CD8-positive, alpha-beta T cell (primary cell): ENCODE measurements at regions of chr3 and their contacts with region 1.

Region 1: DNA sequence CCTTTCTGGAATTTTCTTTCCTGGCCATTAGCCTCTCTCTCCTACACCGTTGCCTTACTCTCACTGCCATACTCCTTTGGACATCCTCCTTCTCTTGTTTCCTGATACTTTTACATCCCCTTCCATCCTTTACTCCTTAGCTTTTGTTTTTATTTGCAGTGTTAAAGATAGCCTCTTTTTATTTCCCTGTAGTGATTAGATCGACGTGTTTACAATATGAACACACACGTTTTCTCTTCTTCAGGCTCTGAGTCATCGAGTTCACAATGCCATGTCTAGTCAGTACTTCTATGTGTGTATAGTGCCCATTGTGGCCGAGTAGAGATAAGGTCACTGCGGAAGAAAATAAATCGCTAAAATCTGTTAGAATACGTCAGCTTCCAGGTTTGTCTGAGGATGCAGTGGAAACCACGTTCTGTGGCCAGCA is 208.5 kb downstream of the LPP start:
- DNase-seq: peak in 3 of 9 experiments; percentile 44 to 65 (median 61)
- ATAC-seq: peak; percentile 66
- H3K4me3 ChIP-seq: no peak overlapping the region
- H3K4me3 Mint-ChIP-seq: peak overlapping the region; percentile 62
- H3K27ac ChIP-seq: peak overlapping the region in 1 of 2 experiments; percentile 9
- H3K27ac Mint-ChIP-seq: peak overlapping the region; percentile 89
- H3K4me1 ChIP-seq: peaks cover 47% of the 10 kb centered on the region
- H3K4me1 Mint-ChIP-seq: peaks cover 57% of the 10 kb centered on the region
- H3K27me3 ChIP-seq: no peaks in the 10 kb centered on the region
- H3K27me3 Mint-ChIP-seq: no peaks in the 10 kb centered on the region
- CTCF ChIP-seq: no peak

Region 2: DNA sequence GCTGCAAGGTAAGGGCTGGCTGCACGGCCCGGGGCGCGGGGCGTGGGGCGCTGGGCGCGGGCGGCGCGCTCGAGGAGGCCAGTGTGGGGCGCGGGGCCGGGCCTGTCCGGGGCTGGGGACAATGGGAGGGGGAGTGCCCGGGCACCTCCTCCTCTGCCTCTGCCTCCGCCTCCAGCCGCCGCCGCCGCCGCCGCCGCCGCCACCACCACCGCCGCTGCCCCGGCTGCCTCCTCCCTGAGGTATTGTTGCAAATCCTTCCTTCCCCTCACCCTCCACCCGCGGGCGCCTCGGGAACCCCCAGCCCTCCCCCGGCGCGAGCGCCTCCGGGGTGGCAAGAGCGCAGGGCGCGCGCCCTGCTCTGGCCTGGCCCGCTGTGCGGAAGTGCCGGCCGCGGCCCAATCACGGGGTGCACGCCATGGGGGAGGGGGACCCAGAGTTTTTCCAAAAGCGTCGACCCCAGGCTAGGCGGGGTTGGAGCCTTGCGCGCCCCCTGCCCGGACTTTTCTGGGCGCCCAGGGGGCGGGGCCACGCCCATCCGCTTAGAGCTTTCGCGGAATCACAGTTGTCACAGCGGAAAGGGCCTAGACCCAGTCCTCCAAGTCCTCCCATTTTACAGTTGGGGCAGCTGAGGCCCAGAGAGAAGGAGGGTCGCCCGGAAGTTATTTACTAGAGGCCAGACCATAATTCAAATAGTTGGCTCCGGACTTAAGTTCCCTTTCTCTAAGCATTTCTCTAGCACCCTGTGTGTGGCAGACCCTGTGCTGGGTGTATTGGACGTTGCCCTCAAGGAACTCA is 208.2 kb before region 1 on chr3 and contains the start of gene LPP:
- CTCF ChIA-PET with region 1: no interaction called
- POLR2A ChIA-PET with region 1: no interaction called
- intact Hi-C with region 1: loop called in 1 of 2 experiments (anchors 5 kb)
- DNase-seq: peak; percentile 60 to 93 (median 79)
- ATAC-seq: peak; percentile 84
- H3K4me3 ChIP-seq: peak within 1 kb of the TSS; percentile 72 to 81
- H3K4me3 Mint-ChIP-seq: peak within 1 kb of the TSS; percentile 88
- H3K27ac ChIP-seq: peak within 1 kb of the TSS; percentile 64 to 79
- H3K27ac Mint-ChIP-seq: peak within 1 kb of the TSS; percentile 90
- H3K4me1 ChIP-seq: peaks cover 27% of the 10 kb centered on the region
- H3K4me1 Mint-ChIP-seq: peaks cover 52% of the 10 kb centered on the region
- H3K27me3 ChIP-seq: no peaks in the 10 kb centered on the region
- H3K27me3 Mint-ChIP-seq: no peaks in the 10 kb centered on the region
- CTCF ChIP-seq: no peak
- total RNA-seq, gene LPP: 35.2 to 37.0 TPM

Region 3: GRCh38 chr3:188320757-188321156 is 41.7 kb before region 1 on chr3:
- CTCF ChIA-PET with region 1: interaction called, 3 read pairs
- POLR2A ChIA-PET with region 1: no interaction called
- intact Hi-C with region 1: loop called in 1 of 2 experiments (anchors 5 kb)
- DNase-seq: no peak
- ATAC-seq: no peak
- H3K4me3 ChIP-seq: no peak overlapping the region
- H3K4me3 Mint-ChIP-seq: no peak overlapping the region
- H3K27ac ChIP-seq: no peak overlapping the region
- H3K27ac Mint-ChIP-seq: no peak overlapping the region
- H3K4me1 ChIP-seq: peaks cover 21% of the 10 kb centered on the region
- H3K4me1 Mint-ChIP-seq: peaks cover 48% of the 10 kb centered on the region
- H3K27me3 ChIP-seq: no peaks in the 10 kb centered on the region
- H3K27me3 Mint-ChIP-seq: no peaks in the 10 kb centered on the region
- CTCF ChIP-seq: no peak

Region 4: GRCh38 chr3:188345223-188345622 is 17.2 kb before region 1 on chr3:
- CTCF ChIA-PET with region 1: interaction called, 3 read pairs
- POLR2A ChIA-PET with region 1: interaction called, 4 read pairs
- intact Hi-C with region 1: loop called in 1 of 2 experiments (anchors 2 kb)
- DNase-seq: no peak
- ATAC-seq: no peak
- H3K4me3 ChIP-seq: no peak overlapping the region
- H3K4me3 Mint-ChIP-seq: no peak overlapping the region
- H3K27ac ChIP-seq: no peak overlapping the region
- H3K27ac Mint-ChIP-seq: no peak overlapping the region
- H3K4me1 ChIP-seq: no peaks in the 10 kb centered on the region
- H3K4me1 Mint-ChIP-seq: peaks cover 17% of the 10 kb centered on the region
- H3K27me3 ChIP-seq: no peaks in the 10 kb centered on the region
- H3K27me3 Mint-ChIP-seq: no peaks in the 10 kb centered on the region
- CTCF ChIP-seq: no peak

Region 5: DNA sequence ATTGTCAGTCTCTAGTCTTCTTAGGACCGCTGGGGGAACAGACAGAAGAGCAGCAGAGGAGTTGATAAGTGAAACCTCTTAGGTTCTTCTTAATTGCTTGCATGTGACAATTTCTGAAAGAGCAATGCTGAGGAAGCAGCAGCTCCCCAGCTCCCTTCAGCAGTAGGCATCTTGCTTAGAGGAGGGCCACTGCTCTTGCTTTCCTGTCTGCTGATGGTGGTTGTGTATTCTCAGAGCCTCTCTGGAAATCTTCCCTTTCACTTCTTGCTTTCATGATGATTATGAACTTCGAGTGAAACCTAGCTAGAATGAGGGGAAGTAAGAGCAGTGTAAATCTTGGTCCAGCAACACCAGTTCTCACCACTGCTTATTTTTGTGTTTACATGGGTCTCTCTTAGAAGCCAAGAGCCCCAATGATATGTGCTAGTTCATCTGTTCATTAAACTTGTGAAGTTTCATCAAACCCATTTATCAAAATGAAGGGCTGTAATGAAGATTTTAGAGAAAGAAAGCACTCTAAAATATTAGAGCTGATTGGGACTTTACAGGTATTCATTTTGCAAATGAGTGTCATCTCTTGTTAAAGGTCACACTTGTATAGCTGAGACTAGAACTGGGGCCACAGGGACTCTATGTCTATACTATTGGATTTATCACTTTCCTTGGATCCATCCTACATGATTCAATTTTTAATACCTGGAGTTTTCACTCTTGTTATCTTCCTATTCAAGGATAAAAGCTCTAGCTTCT is 38.3 kb after region 1 on chr3:
- CTCF ChIA-PET with region 1: no interaction called
- POLR2A ChIA-PET with region 1: no interaction called
- intact Hi-C with region 1: loop called in 1 of 2 experiments (anchors 5 kb)
- DNase-seq: peak in 2 of 9 experiments; percentile 9 to 32
- ATAC-seq: peak; percentile 42
- H3K4me3 ChIP-seq: no peak overlapping the region
- H3K4me3 Mint-ChIP-seq: no peak overlapping the region
- H3K27ac ChIP-seq: peak overlapping the region in 1 of 2 experiments; percentile 37
- H3K27ac Mint-ChIP-seq: peak overlapping the region; percentile 33
- H3K4me1 ChIP-seq: peaks cover 9% of the 10 kb centered on the region
- H3K4me1 Mint-ChIP-seq: peaks cover 50% of the 10 kb centered on the region
- H3K27me3 ChIP-seq: no peaks in the 10 kb centered on the region
- H3K27me3 Mint-ChIP-seq: no peaks in the 10 kb centered on the region
- CTCF ChIP-seq: no peak